CD4-positive, alpha-beta memory T cell (primary cell): ENCODE measurements at regions of chr1 and their contacts with region 1.

Region 1: GRCh38 chr1:239719642-239720258 is 333.4 kb downstream of the CHRM3 start:
- DNase-seq: peak; percentile 72 to 79 (median 78)
- H3K4me3 ChIP-seq: peak overlapping the region; percentile 61 to 82
- H3K4me3 Mint-ChIP-seq: peak overlapping the region in 3 of 8 donors; percentile 91 to 98 (median 97)
- H3K27ac ChIP-seq: peak overlapping the region; percentile 66
- H3K27ac Mint-ChIP-seq: peak overlapping the region in 6 of 7 donors; percentile 84 to 98 (median 91)
- H3K4me1 ChIP-seq: peaks cover 80% of the 10 kb centered on the region
- H3K4me1 Mint-ChIP-seq: peaks cover 24 to 53% (median 41%) of the 10 kb centered on the region in 4 donors
- H3K27me3 ChIP-seq: no peaks in the 10 kb centered on the region
- H3K27me3 Mint-ChIP-seq: no peaks in the 10 kb centered on the region

Region 2: GRCh38 chr1:239413916-239414315 is 305.8 kb before region 1 on chr1:
- CTCF ChIA-PET with region 1: no interaction called
- POLR2A ChIA-PET with region 1: no interaction called
- intact Hi-C with region 1: loop called (anchors 5 kb)
- DNase-seq: no peak
- H3K4me3 ChIP-seq: no peak overlapping the region
- H3K4me3 Mint-ChIP-seq: no peak overlapping the region
- H3K27ac ChIP-seq: no peak overlapping the region
- H3K27ac Mint-ChIP-seq: peak overlapping the region in 1 of 7 donors; percentile 3
- H3K4me1 ChIP-seq: no peaks in the 10 kb centered on the region
- H3K4me1 Mint-ChIP-seq: no peaks in the 10 kb centered on the region
- H3K27me3 ChIP-seq: no peaks in the 10 kb centered on the region
- H3K27me3 Mint-ChIP-seq: no peaks in the 10 kb centered on the region

Region 3: GRCh38 chr1:239547987-239548386 is 171.8 kb before region 1 on chr1:
- CTCF ChIA-PET with region 1: no interaction called
- POLR2A ChIA-PET with region 1: interaction called, 6 read pairs
- intact Hi-C with region 1: loop called (anchors 5 kb)
- DNase-seq: peak in 4 of 5 donors; percentile 11 to 26 (median 15)
- H3K4me3 ChIP-seq: peak overlapping the region; percentile 7 to 37
- H3K4me3 Mint-ChIP-seq: peak overlapping the region; percentile 76 to 87 (median 86)
- H3K27ac ChIP-seq: no peak overlapping the region
- H3K27ac Mint-ChIP-seq: peak overlapping the region; percentile 45 to 95 (median 89)
- H3K4me1 ChIP-seq: peaks cover 7% of the 10 kb centered on the region
- H3K4me1 Mint-ChIP-seq: peaks cover 16 to 22% (median 17%) of the 10 kb centered on the region in 4 donors
- H3K27me3 ChIP-seq: no peaks in the 10 kb centered on the region
- H3K27me3 Mint-ChIP-seq: no peaks in the 10 kb centered on the region

Region 4: GRCh38 chr1:239587066-239587465 is 132.7 kb before region 1 on chr1:
- CTCF ChIA-PET with region 1: interaction called, 4 read pairs
- POLR2A ChIA-PET with region 1: interaction called, 4 read pairs
- intact Hi-C with region 1: loop called (anchors 5 kb)
- DNase-seq: peak; percentile 45 to 59 (median 50)
- H3K4me3 ChIP-seq: no peak overlapping the region
- H3K4me3 Mint-ChIP-seq: peak overlapping the region in 3 of 8 donors; percentile 14 to 34 (median 28)
- H3K27ac ChIP-seq: no peak overlapping the region
- H3K27ac Mint-ChIP-seq: peak overlapping the region in 4 of 7 donors; percentile 43 to 77 (median 62)
- H3K4me1 ChIP-seq: peaks cover 8% of the 10 kb centered on the region
- H3K4me1 Mint-ChIP-seq: peaks cover 5 to 11% (median 7%) of the 10 kb centered on the region in 4 donors
- H3K27me3 ChIP-seq: no peaks in the 10 kb centered on the region
- H3K27me3 Mint-ChIP-seq: peaks cover 0 to 3% of the 10 kb centered on the region in 2 donors

Region 5: GRCh38 chr1:239706245-239706892 is 13.4 kb before region 1 on chr1:
- CTCF ChIA-PET with region 1: interaction called, 35 read pairs
- POLR2A ChIA-PET with region 1: interaction called, 49 read pairs
- intact Hi-C with region 1: no loop called
- DNase-seq: no peak
- H3K4me3 ChIP-seq: no peak overlapping the region
- H3K4me3 Mint-ChIP-seq: no peak overlapping the region
- H3K27ac ChIP-seq: no peak overlapping the region
- H3K27ac Mint-ChIP-seq: peak overlapping the region in 1 of 7 donors; percentile 76
- H3K4me1 ChIP-seq: no peaks in the 10 kb centered on the region
- H3K4me1 Mint-ChIP-seq: peaks cover 4 to 16% (median 12%) of the 10 kb centered on the region in 4 donors
- H3K27me3 ChIP-seq: no peaks in the 10 kb centered on the region
- H3K27me3 Mint-ChIP-seq: no peaks in the 10 kb centered on the region

Region 6: DNA sequence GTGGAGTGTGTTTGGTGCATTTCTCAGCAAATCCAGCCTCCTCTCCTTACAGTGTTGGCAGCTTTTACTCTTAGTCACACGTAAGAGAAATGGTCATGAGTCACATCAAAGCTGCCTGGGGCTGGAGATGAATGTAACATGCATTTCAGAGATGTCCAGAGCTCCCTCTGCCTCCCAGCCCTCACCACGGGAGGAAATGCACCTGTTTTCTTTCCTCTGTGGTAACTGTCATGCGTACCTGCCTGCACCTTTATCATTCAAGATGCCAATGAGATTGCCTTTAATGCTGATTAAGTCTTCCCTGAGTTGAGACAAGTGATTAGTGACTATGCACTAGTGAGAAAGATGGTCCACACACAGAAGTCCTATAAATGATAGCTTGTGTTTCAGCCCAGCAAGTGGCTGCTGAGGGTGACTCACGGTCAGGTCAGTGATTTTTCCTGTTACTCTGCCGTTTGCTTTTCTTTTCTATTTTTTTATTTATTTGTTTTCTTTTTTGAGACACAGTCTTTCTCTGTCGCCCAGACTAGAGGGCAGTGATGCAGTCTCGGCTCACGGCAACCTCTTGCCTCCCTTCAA is 94.6 kb after region 1 on chr1:
- CTCF ChIA-PET with region 1: no interaction called
- POLR2A ChIA-PET with region 1: interaction called, 10 read pairs
- intact Hi-C with region 1: loop called (anchors 5 kb)
- DNase-seq: peak in 2 of 5 donors; percentile 4 to 5
- H3K4me3 ChIP-seq: no peak overlapping the region
- H3K4me3 Mint-ChIP-seq: peak overlapping the region; percentile 33 to 78 (median 66)
- H3K27ac ChIP-seq: no peak overlapping the region
- H3K27ac Mint-ChIP-seq: peak overlapping the region in 5 of 7 donors; percentile 1 to 77 (median 18)
- H3K4me1 ChIP-seq: peaks cover 30% of the 10 kb centered on the region
- H3K4me1 Mint-ChIP-seq: peaks cover 24 to 44% (median 40%) of the 10 kb centered on the region in 4 donors
- H3K27me3 ChIP-seq: no peaks in the 10 kb centered on the region
- H3K27me3 Mint-ChIP-seq: no peaks in the 10 kb centered on the region

Region 7: GRCh38 chr1:239898062-239898730 is 178.4 kb after region 1 on chr1:
- CTCF ChIA-PET with region 1: interaction called, 7 read pairs
- POLR2A ChIA-PET with region 1: no interaction called
- intact Hi-C with region 1: loop called (anchors 1 kb)
- DNase-seq: peak; percentile 50 to 71 (median 67)
- H3K4me3 ChIP-seq: no peak overlapping the region
- H3K4me3 Mint-ChIP-seq: peak overlapping the region in 1 of 8 donors; percentile 1
- H3K27ac ChIP-seq: no peak overlapping the region
- H3K27ac Mint-ChIP-seq: no peak overlapping the region
- H3K4me1 ChIP-seq: no peaks in the 10 kb centered on the region
- H3K4me1 Mint-ChIP-seq: peaks cover 0 to 3% (median under 1%) of the 10 kb centered on the region in 4 donors
- H3K27me3 ChIP-seq: no peaks in the 10 kb centered on the region
- H3K27me3 Mint-ChIP-seq: peaks cover 2 to 3% of the 10 kb centered on the region in 2 donors